Naive thymus-derived CD4-positive, alpha-beta T cell (primary cell): ENCODE measurements at regions of chrX and their contacts with region 1.

Region 1: GRCh38 chrX:43065978-43066377 is 288.0 kb upstream of the PPP1R2C start:
- DNase-seq: no peak
- ATAC-seq: no peak
- H3K4me3 ChIP-seq: no peak overlapping the region
- H3K4me3 Mint-ChIP-seq: no peak overlapping the region
- H3K27ac ChIP-seq: no peak overlapping the region
- H3K27ac Mint-ChIP-seq: no peak overlapping the region
- H3K4me1 ChIP-seq: no peaks in the 10 kb centered on the region
- H3K4me1 Mint-ChIP-seq: no peaks in the 10 kb centered on the region
- H3K27me3 ChIP-seq: no peaks in the 10 kb centered on the region
- H3K27me3 Mint-ChIP-seq: no peaks in the 10 kb centered on the region

Region 2: DNA sequence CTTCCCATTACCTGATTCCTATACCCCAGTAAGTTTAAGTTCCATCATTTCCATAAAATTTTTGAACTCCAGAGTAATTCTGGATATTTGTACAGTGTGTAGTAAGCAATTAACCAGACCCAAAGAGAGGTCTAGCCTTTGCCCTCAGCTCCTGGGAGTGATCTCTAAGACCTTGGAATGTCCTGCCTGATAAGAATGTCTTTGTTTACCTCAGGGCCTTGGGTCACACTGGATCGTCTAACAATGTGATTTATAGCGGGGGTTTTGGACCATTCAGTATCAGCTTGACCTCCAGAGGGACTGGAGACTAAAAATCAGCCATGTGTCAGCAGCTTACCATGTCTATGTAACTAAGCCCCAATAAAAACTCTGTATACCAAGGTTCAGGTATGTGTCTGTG is 42.9 kb after region 1 on chrX:
- CTCF ChIA-PET with region 1: no interaction called
- POLR2A ChIA-PET with region 1: no interaction called
- intact Hi-C with region 1: loop called in 1 of 2 experiments (anchors 5 kb)
- DNase-seq: no peak
- ATAC-seq: no peak
- H3K4me3 ChIP-seq: no peak overlapping the region
- H3K4me3 Mint-ChIP-seq: no peak overlapping the region
- H3K27ac ChIP-seq: no peak overlapping the region
- H3K27ac Mint-ChIP-seq: no peak overlapping the region
- H3K4me1 ChIP-seq: peaks cover 0 to 7% of the 10 kb centered on the region in 2 donors
- H3K4me1 Mint-ChIP-seq: peaks cover 7 to 24% (median 16%) of the 10 kb centered on the region in 7 donors
- H3K27me3 ChIP-seq: no peaks in the 10 kb centered on the region
- H3K27me3 Mint-ChIP-seq: no peaks in the 10 kb centered on the region